ENCODE measurements at regions of chr6 and their contacts with region 1.

Region 1: DNA sequence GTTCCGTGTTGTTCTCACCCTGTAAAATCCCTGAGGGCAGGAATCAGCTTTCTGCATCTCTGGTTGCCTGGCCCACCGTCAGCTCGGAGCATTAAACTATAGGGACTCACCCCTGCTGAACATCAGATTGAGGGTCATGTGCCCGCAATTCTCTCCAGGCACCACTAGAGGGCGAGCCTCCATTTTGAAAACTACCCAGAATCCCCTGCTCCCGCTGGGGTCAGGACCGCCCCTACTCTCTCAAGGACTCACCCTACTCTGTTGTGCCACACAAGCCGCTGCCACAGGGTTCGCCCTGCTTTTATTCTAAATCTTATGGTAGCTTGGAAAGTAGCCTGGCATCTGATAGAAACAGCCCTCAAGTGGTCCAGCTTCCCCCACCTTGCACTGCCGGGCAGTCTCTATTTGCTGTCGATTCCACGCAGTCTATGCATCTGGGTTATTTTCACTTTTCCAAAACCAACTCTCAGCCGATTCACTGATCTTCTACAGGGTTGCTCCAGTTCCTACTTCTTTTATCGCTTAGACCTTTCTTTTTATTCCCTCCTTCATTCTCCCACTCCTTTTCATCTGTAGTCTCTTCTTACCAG is 244.1 kb upstream of the QKI start:
- DNase-seq: no peak
- H3K4me3 Mint-ChIP-seq: no peak overlapping the region
- H3K27ac Mint-ChIP-seq: no peak overlapping the region
- H3K4me1 Mint-ChIP-seq: no peaks in the 10 kb centered on the region
- H3K27me3 Mint-ChIP-seq: no peaks in the 10 kb centered on the region

Region 2: GRCh38 chr6:163956571-163957407 is 786.4 kb after region 1 on chr6:
- intact Hi-C with region 1: loop called (anchors 10 kb)
- DNase-seq: peak; percentile 41
- H3K4me3 Mint-ChIP-seq: no peak overlapping the region
- H3K27ac Mint-ChIP-seq: no peak overlapping the region
- H3K4me1 Mint-ChIP-seq: no peaks in the 10 kb centered on the region
- H3K27me3 Mint-ChIP-seq: peaks cover 9% of the 10 kb centered on the region